ENCODE measurements at regions of chr10 and their contacts with region 1.

Region 1: DNA sequence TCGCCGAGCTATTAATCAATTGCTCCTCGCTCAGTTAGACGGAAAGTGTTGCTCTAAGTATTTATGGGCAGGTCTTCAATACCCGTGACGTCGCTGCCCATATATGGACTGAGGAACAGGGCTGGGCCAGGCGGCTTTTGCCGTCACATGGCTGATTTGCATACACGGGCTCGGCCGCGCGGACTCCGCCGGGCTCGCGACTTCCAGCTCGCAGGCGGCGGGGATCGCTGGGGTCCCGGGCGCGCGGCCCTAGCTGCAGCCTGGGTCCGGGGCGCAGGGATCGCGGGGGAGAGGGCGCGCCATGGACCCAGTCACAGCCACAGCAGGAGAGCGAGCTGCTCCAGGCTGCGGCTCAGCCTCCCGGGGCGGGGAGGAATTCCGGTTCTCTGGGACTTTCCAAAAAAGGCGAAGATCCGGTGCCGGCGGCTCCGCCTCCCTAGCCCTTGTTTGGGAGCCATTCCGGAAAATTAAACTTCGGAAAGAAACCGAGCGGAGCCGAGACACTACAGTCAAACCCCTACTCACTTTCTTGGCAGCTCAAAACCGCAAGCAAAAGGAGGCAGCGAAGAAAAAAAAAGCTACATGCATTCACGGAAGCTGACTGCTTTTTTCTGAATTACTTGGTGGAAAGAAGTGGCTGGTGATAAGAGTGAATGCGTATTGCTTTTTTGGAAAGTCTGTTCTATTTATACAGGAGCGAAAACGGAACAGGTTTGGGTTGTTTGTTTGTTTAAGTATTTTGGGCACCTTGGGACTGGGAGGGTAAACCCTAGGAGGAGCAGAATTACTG is at the start of gene EGR2:
- DNase-seq: peak; percentile 61
- H3K4me3 ChIP-seq: peak within 1 kb of the TSS; percentile 65
- CTCF ChIP-seq: no peak

Region 2: DNA sequence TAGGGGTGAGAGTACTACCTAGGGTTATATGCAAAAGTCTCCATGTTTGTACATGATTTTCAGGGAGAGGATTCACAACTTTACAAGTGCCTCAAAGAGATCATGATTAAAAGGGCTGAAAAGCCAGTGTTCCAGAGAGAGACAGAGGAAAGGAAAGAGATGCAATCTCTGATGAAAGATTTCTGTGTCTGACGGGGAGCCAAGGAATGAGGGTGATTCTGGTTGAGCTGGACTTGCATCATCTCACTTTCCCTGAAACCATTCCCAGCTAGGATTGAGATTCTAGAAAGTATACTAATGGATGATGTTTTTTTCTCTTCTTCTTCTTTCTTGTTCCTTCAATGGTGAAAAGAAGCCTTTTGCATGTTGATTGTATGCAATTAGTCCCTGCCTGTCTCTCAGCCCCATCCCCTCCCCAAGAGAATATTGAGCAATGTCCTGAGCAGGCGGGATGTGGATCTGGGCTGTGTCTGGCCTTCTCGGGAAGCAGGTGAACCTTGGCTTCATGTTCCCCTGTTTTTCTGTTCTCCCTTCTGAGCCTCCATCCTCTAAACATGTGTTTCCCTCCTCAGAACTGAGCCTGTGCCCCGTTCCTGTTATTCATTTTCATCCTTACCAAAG is 256.2 kb before region 1 on chr10:
- CTCF ChIA-PET with region 1: interaction called, 10 read pairs
- POLR2A ChIA-PET with region 1: no interaction called
- DNase-seq: peak; percentile 53
- H3K4me3 ChIP-seq: no peak overlapping the region
- CTCF ChIP-seq: no peak

Region 3: GRCh38 chr10:62610649-62611229 is 205.8 kb before region 1 on chr10:
- CTCF ChIA-PET with region 1: interaction called, 79 read pairs
- POLR2A ChIA-PET with region 1: interaction called, 3 read pairs
- DNase-seq: no peak
- H3K4me3 ChIP-seq: no peak overlapping the region
- CTCF ChIP-seq: peak; percentile 85

Region 4: GRCh38 chr10:62804356-62805230 is 11.9 kb before region 1 on chr10 and contains the start of gene ADO:
- CTCF ChIA-PET with region 1: interaction called, 30 read pairs
- POLR2A ChIA-PET with region 1: interaction called, 5 read pairs
- DNase-seq: peak; percentile 10
- H3K4me3 ChIP-seq: peak within 1 kb of the TSS; percentile 92
- CTCF ChIP-seq: no peak

Region 5: DNA sequence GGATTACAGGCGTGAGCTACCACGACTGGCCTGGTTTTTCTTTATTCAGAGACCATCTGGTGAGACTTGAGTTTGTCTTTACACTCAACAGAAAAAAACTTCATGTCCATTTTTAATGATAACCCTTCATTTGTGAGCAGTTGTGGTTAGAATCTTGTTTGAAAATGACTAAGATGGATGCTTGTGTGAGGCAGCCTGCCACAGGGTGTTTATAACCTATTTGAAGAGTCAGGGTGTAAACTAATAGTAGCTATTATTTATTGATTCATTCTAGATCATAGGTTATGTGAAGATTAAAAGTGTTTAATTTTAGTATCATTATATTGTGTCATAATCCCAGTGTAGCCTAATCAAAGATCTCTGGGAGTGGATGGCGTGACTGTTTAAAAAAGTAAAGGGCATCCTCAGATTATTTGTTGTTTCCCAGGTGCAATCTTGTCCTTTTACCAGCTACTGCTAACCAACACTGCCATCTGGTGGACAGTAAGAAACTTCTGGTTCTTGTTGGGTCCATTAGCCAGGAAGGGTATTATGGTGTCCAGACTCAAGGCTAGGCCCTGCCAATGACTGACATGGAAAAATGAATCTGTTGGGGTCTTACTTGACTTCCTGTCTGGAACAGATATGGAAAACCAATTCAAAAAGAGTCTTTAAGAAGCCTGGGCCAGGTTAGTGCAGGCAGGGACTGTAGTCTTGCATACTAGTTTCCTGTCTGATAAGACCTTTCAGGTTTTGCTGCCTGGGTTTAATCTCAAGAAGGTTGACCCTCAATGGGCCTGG is 341.5 kb after region 1 on chr10:
- CTCF ChIA-PET with region 1: interaction called, 19 read pairs
- POLR2A ChIA-PET with region 1: no interaction called
- DNase-seq: peak; percentile 71
- H3K4me3 ChIP-seq: no peak overlapping the region
- CTCF ChIP-seq: peak; percentile 61

Measured in AG04449 (cell line).